BJ (cell line): ENCODE measurements at regions of chr15 and their contacts with region 1.

Region 1: GRCh38 chr15:43958861-43959330 is 132.1 kb downstream of the WDR76 start:
- DNase-seq: peak; percentile 73
- H3K4me3 ChIP-seq: no peak overlapping the region
- H3K27me3 ChIP-seq: no peaks in the 10 kb centered on the region
- CTCF ChIP-seq: no peak

Region 2: GRCh38 chr15:43872416-43873020 is 86.4 kb before region 1 on chr15:
- CTCF ChIA-PET with region 1: no interaction called
- POLR2A ChIA-PET with region 1: no interaction called
- DNase-seq: peak; percentile 15
- H3K4me3 ChIP-seq: no peak overlapping the region
- H3K27me3 ChIP-seq: no peaks in the 10 kb centered on the region
- CTCF ChIP-seq: peak; percentile 73

Region 3: DNA sequence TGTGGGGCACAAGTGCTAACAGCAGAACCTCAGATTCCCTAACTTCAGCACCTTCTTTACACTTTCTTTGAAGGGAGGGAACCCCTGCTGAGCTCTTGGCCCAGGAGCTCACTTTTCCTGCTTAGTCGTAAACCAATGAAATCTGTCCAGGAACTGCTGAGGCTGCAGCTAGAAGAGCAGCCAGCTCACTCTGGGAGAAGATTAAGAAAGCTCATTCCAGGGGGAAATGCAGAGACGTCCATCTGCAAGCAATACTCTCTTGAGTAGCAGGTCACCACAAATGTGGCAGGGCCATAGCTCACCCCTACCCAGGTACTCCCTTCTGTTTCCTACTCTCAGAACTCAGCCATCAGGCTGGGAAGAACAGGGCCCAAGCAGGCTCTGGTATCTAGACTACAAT is 28.8 kb before region 1 on chr15:
- CTCF ChIA-PET with region 1: no interaction called
- POLR2A ChIA-PET with region 1: no interaction called
- DNase-seq: no peak
- H3K4me3 ChIP-seq: no peak overlapping the region
- H3K27me3 ChIP-seq: no peaks in the 10 kb centered on the region
- CTCF ChIP-seq: no peak

Region 4: DNA sequence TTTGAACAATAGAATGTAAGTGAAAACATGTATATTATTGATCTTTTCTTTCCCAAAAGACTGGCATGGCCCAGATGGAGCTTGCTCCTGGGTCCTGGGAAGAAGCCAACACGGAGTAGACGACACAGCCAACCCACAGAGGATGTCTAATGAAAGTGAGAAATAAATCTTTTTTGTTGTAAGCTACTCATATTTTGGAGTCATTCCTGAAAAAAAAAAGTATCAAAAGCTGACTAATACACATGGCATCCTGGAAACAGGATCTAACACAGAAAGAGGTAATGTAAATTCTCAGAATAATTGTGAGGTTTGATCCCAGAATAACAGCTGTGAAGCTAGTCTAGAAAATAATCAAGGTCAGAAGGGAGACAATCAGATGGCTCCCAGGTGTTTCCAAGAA is 248.7 kb after region 1 on chr15:
- CTCF ChIA-PET with region 1: no interaction called
- POLR2A ChIA-PET with region 1: interaction called, 14 read pairs
- DNase-seq: peak; percentile 33
- H3K4me3 ChIP-seq: no peak overlapping the region
- H3K27me3 ChIP-seq: no peaks in the 10 kb centered on the region
- CTCF ChIP-seq: no peak